ENCODE measurements at regions of chr6 and their contacts with region 1.

Region 1: DNA sequence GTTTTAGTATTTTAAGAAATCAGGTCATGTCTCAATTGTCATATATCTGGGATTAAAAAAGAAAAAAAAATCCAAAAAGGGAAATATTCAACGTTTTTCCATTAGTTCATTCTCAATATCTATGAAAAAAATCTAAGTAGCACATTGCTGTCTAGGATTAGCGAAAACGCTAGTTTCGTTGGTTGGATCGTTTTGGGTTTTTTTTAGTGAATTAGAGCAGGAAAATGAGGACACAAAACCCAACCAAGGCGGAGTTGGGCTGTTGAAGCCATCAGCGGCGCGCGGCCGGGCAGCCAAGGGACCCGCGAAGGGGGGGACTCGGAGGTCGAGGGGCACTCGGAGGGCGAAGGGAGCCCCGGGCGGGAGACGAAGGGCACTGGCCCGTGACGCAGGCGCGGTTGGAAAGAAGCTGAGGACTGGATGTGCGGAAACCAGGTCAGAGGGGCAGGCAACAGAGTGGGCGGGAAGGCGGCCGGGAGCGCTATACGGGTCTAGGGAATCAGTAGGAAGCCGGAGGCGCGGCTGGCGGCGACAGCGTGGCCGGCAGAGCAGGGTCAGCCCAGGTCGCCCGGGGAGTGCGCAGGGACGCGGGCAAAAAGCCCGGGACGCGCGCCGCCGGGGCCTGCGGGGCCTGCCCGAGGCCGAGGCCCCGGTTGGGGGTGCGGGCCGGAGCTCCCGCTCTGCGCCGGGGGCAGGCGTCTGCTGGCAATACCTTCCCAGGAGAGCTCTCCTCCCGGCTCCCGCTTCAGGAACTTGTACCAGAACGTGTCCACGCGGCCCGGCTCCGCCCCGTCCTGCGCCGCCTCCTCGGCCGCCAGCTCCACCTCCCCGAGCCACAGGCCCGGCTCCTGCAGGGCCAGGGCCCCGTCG is 599 bp downstream of the EPM2A start:
- DNase-seq: peak; percentile 26 to 80 (median 65)
- ATAC-seq: peak; percentile 54
- H3K4me3 ChIP-seq: peak overlapping the region; percentile 52 to 67
- H3K4me3 Mint-ChIP-seq: peak overlapping the region; percentile 96
- H3K27ac ChIP-seq: peak overlapping the region; percentile 52 to 72
- H3K27ac Mint-ChIP-seq: peak overlapping the region; percentile 98
- H3K4me1 ChIP-seq: peaks cover 19% of the 10 kb centered on the region
- H3K4me1 Mint-ChIP-seq: peaks cover 34% of the 10 kb centered on the region
- H3K27me3 ChIP-seq: no peaks in the 10 kb centered on the region
- H3K27me3 Mint-ChIP-seq: no peaks in the 10 kb centered on the region
- CTCF ChIP-seq: no peak

Region 2: GRCh38 chr6:145749632-145750031 is 14.9 kb after region 1 on chr6:
- CTCF ChIA-PET with region 1: no interaction called
- POLR2A ChIA-PET with region 1: no interaction called
- intact Hi-C with region 1: no loop called
- DNase-seq: no peak
- ATAC-seq: no peak
- H3K4me3 ChIP-seq: no peak overlapping the region
- H3K4me3 Mint-ChIP-seq: no peak overlapping the region
- H3K27ac ChIP-seq: no peak overlapping the region
- H3K27ac Mint-ChIP-seq: no peak overlapping the region
- H3K4me1 ChIP-seq: no peaks in the 10 kb centered on the region
- H3K4me1 Mint-ChIP-seq: peaks cover 2% of the 10 kb centered on the region
- H3K27me3 ChIP-seq: no peaks in the 10 kb centered on the region
- H3K27me3 Mint-ChIP-seq: no peaks in the 10 kb centered on the region
- CTCF ChIP-seq: no peak

Region 3: GRCh38 chr6:145814501-145815308 is 80.0 kb after region 1 on chr6 and contains the start of gene FBXO30:
- CTCF ChIA-PET with region 1: interaction called, 6 read pairs
- POLR2A ChIA-PET with region 1: interaction called, 37 read pairs
- intact Hi-C with region 1: loop called (anchors 1 to 2 kb)
- DNase-seq: peak; percentile 73 to 94 (median 84)
- ATAC-seq: peak; percentile 89
- H3K4me3 ChIP-seq: peak within 1 kb of the TSS; percentile 80 to 83
- H3K4me3 Mint-ChIP-seq: peak within 1 kb of the TSS; percentile 96
- H3K27ac ChIP-seq: peak within 1 kb of the TSS; percentile 58 to 89
- H3K27ac Mint-ChIP-seq: peak within 1 kb of the TSS; percentile 96
- H3K4me1 ChIP-seq: peaks cover 32% of the 10 kb centered on the region
- H3K4me1 Mint-ChIP-seq: peaks cover 45% of the 10 kb centered on the region
- H3K27me3 ChIP-seq: no peaks in the 10 kb centered on the region
- H3K27me3 Mint-ChIP-seq: no peaks in the 10 kb centered on the region
- CTCF ChIP-seq: peak; percentile 33
- total RNA-seq, gene FBXO30: 1.5 to 1.7 TPM

Region 4: GRCh38 chr6:145887969-145888368 is 153.2 kb after region 1 on chr6:
- CTCF ChIA-PET with region 1: no interaction called
- POLR2A ChIA-PET with region 1: no interaction called
- intact Hi-C with region 1: loop called in 1 of 2 experiments (anchors 10 kb)
- DNase-seq: peak in 5 of 9 experiments; percentile 2 to 40 (median 21)
- ATAC-seq: no peak
- H3K4me3 ChIP-seq: no peak overlapping the region
- H3K4me3 Mint-ChIP-seq: no peak overlapping the region
- H3K27ac ChIP-seq: no peak overlapping the region
- H3K27ac Mint-ChIP-seq: no peak overlapping the region
- H3K4me1 ChIP-seq: no peaks in the 10 kb centered on the region
- H3K4me1 Mint-ChIP-seq: no peaks in the 10 kb centered on the region
- H3K27me3 ChIP-seq: no peaks in the 10 kb centered on the region
- H3K27me3 Mint-ChIP-seq: no peaks in the 10 kb centered on the region
- CTCF ChIP-seq: peak; percentile 25